ENCODE measurements at regions of chr14 and their contacts with region 1.

Region 1: GRCh38 chr14:103450416-103450815 is 65.2 kb downstream of the MARK3 start:
- DNase-seq: no peak
- ATAC-seq: no peak
- H3K4me3 ChIP-seq: no peak overlapping the region
- H3K27ac ChIP-seq: no peak overlapping the region
- H3K4me1 ChIP-seq: no peaks in the 10 kb centered on the region
- H3K27me3 ChIP-seq: no peaks in the 10 kb centered on the region
- CTCF ChIP-seq: no peak
- EP300 ChIP-seq: no peak
- POLR2A ChIP-seq: no peak
- RAD21 ChIP-seq: no peak

Region 2: DNA sequence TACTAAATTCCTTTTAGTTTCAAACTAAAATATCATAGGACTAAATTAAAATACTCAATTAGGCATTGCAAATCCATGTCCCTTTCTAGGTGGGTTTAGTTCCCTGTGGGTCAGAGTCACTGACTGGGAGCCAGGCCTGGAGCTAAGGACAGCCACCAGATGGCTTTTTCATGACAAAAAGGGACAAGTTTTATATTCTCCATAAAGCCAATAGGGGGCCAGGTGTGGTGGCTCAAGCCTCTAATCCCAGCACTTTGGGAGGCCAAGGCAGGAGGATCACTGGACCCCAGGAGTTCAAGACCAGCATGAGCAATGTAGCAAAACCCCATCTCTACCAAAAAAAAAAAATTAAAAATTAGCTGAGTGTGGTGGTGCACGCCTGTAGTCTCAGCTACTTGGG is 151.8 kb before region 1 on chr14:
- CTCF ChIA-PET with region 1: no interaction called
- POLR2A ChIA-PET with region 1: no interaction called
- RAD21 ChIA-PET with region 1: no interaction called
- SMC1A ChIA-PET with region 1: no interaction called
- in situ Hi-C with region 1: no loop called
- intact Hi-C with region 1: no loop called
- DNase-seq: no peak
- ATAC-seq: no peak
- H3K4me3 ChIP-seq: no peak overlapping the region
- H3K27ac ChIP-seq: no peak overlapping the region
- H3K4me1 ChIP-seq: no peaks in the 10 kb centered on the region
- H3K27me3 ChIP-seq: no peaks in the 10 kb centered on the region
- CTCF ChIP-seq: 0 out of 6 replicates have a peak, but pooled peaks of 1 of the 3 experiments have one; percentile 6
- EP300 ChIP-seq: no peak
- POLR2A ChIP-seq: no peak
- RAD21 ChIP-seq: no peak

Region 3: GRCh38 chr14:103436533-103436932 is 13.9 kb before region 1 on chr14:
- CTCF ChIA-PET with region 1: no interaction called
- POLR2A ChIA-PET with region 1: no interaction called
- RAD21 ChIA-PET with region 1: no interaction called
- SMC1A ChIA-PET with region 1: interaction called, 12 read pairs
- in situ Hi-C with region 1: no loop called
- intact Hi-C with region 1: no loop called
- DNase-seq: no peak
- ATAC-seq: no peak
- H3K4me3 ChIP-seq: no peak overlapping the region
- H3K27ac ChIP-seq: no peak overlapping the region
- H3K4me1 ChIP-seq: no peaks in the 10 kb centered on the region
- H3K27me3 ChIP-seq: no peaks in the 10 kb centered on the region
- CTCF ChIP-seq: no peak
- EP300 ChIP-seq: no peak
- POLR2A ChIP-seq: no peak
- RAD21 ChIP-seq: no peak

Measured in GM12878 (cell line).